Transverse colon (tissue), 4 donors: ENCODE measurements at regions of chr1 and their contacts with region 1.

Region 1: DNA sequence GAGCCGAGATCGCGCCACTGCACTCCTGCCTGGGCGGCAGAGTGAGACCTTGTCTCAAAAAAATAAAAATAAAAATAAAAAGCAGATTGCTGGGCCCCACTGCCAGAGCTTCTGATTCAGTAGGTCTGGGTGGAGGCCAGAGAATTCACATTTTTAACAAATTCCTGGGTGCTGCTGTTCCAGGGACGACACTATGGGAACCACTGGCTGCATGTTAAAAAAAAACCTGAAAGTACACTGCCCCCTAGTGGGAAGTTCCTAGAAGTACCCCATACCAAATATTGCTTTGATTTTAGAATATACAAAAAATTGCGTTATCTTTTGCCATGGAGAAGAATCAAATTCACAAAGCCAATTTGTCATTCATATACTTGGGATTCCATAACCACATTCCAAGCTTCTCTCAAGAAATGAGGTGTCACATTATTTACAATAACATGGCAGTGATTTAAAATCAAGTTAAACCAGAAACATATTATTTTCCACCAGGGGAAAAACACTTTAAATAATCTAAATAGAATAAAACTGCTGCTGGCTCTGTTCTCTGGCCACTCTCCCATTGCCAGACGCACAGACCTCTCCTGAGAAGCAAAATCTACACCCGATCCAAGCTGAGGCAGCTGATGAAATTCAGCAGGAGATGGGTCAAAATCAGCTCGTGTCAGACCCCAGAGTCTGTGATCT is 27.4 kb downstream of the SYF2 start:
- DNase-seq: no peak
- H3K4me3 ChIP-seq: no peak overlapping the region
- H3K27ac ChIP-seq: no peak overlapping the region
- H3K4me1 ChIP-seq: peaks cover 0 to 27% (median 10%) of the 10 kb centered on the region in 4 donors
- H3K27me3 ChIP-seq: no peaks in the 10 kb centered on the region
- CTCF ChIP-seq: peak; percentile 76 to 88 (median 80)
- EP300 ChIP-seq: no peak
- POLR2A ChIP-seq: no peak

Region 2: GRCh38 chr1:24673336-24673735 is 531.6 kb before region 1 on chr1:
- in situ Hi-C with region 1: loop called (anchors 25 kb)
- intact Hi-C with region 1: no loop called
- DNase-seq: no peak
- H3K4me3 ChIP-seq: no peak overlapping the region
- H3K27ac ChIP-seq: no peak overlapping the region
- H3K4me1 ChIP-seq: no peaks in the 10 kb centered on the region
- H3K27me3 ChIP-seq: no peaks in the 10 kb centered on the region
- CTCF ChIP-seq: no peak
- EP300 ChIP-seq: no peak
- POLR2A ChIP-seq: no peak

Region 3: GRCh38 chr1:24688621-24689195 is 516.2 kb before region 1 on chr1:
- in situ Hi-C with region 1: loop called in 3 of 4 experiments (anchors 25 kb)
- intact Hi-C with region 1: no loop called
- DNase-seq: peak; percentile 74
- H3K4me3 ChIP-seq: no peak overlapping the region
- H3K27ac ChIP-seq: no peak overlapping the region
- H3K4me1 ChIP-seq: peaks cover 0 to 6% (median 0%) of the 10 kb centered on the region in 4 donors
- H3K27me3 ChIP-seq: no peaks in the 10 kb centered on the region
- CTCF ChIP-seq: peak; percentile 79 to 87 (median 83)
- EP300 ChIP-seq: no peak
- POLR2A ChIP-seq: no peak

Region 4: DNA sequence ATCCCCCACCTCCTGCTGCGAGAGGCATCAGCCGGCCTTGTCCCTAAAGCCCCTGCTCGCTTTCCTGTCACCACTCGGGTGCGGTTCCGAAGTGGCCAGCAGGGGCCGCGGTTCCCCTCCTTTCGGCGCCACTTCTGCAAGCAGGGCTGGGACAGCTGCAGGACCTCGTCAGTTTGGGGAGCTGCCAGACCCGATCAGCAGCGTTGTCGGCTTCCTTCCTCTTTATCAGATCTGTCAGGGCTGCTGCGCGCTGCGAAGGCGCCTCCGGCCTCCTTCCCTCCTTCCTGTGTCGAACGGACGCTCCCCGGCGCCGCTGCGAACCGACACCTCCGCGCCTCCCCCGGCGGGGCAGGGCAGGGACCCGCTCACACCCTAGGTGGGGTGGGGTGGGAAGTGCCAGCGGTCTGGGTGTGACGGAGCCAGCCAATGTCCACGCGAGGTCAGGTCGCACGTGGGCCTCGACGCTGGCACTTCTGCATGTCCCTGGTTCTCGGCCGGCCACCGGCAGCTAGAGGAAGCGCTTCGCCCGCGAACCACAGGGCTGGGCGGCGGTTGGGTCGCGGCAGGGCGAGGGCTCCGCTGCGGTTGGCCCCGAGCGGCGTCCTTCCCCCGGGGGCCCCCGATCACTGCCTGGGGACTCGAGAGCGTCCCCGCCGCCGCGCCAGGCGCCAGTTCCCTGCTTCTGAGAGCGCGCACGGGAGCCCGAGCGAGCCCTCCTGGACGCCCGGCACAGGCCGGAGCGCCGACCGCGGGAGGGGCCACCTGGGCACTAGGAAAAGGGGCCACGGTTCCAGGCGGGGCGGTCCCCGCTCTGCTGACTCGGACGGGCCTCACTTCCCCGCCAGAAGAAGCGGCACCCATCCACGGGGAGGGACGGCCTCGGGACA is 356.7 kb before region 1 on chr1:
- in situ Hi-C with region 1: loop called in 1 of 4 experiments (anchors 5 kb)
- intact Hi-C with region 1: loop called (anchors 5 kb)
- DNase-seq: peak; percentile 95
- H3K4me3 ChIP-seq: peak overlapping the region; percentile 31 to 58 (median 46)
- H3K27ac ChIP-seq: peak overlapping the region; percentile 68 to 84 (median 72)
- H3K4me1 ChIP-seq: peaks cover 0 to 18% (median 9%) of the 10 kb centered on the region in 4 donors
- H3K27me3 ChIP-seq: no peaks in the 10 kb centered on the region
- CTCF ChIP-seq: peak; percentile 93 to 98 (median 96)
- EP300 ChIP-seq: no peak
- POLR2A ChIP-seq: peak; percentile 47

Region 5: DNA sequence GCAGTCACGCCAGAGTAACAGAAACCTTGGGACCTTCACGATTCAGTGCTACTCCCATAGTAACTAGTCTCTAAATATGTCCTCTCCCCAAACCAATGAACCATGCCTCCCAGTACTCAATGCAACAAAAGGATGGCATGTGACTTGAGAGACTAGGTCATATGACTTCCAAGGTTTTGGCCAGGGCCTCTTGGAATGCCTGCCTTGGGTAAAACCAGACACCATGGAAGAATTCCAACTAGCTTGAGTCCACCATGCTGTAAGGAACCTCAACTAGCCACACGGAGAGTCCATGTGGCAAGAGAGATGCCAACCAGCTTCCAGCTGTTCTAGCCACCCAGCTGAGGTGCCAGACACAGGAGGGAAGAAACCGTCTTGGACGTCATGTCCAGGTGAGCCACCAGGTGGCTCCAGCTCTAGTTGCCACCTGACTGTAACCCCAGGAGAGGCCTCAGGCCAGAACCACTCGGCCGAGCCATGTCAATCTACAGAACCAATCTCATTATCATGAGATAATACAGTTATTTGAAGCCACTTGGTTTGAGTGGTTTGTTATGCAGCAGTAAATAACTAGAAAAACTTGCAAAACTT is 87.6 kb before region 1 on chr1:
- in situ Hi-C with region 1: loop called in 1 of 4 experiments (anchors 5 kb)
- intact Hi-C with region 1: no loop called
- DNase-seq: peak; percentile 59
- H3K4me3 ChIP-seq: no peak overlapping the region
- H3K27ac ChIP-seq: no peak overlapping the region
- H3K4me1 ChIP-seq: no peaks in the 10 kb centered on the region
- H3K27me3 ChIP-seq: no peaks in the 10 kb centered on the region
- CTCF ChIP-seq: peak in 4 of 5 experiments; percentile 47 to 61 (median 48)
- EP300 ChIP-seq: no peak
- POLR2A ChIP-seq: no peak